SK-N-SH (cell line): ENCODE measurements at regions of chr2 and their contacts with region 1.

Region 1: DNA sequence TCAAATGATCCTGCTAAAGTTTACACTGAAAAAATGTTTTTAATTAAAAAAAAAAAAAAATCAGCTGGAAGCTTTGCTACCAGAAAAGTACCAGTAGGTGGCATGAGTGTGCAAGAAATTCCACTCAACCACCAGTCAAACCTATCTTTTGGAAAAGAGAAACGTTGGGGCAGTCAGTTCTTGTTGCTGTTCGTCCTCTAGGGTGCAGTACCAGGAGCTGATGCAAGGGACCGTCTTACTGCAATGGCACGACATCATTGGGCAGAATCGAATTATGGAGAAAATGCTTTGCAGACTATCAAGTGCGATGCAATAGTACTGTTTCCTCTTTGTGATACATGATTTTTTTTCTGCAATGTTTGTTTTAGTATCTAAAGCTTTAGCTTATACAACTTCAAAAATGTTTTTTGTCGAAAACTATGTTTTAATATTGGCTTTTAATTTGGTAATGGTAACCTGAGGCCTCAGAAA is 18.3 kb downstream of the YPEL5 start:
- DNase-seq: peak; percentile 88
- H3K4me3 ChIP-seq: no peak overlapping the region; a peak in 1 of 4 replicates
- H3K27ac ChIP-seq: no peak overlapping the region
- H3K4me1 ChIP-seq: peaks cover 2 to 9% of the 10 kb centered on the region in 2 experiments; a peak in 3 of 4 replicates
- H3K27me3 ChIP-seq: no peaks in the 10 kb centered on the region
- CTCF ChIP-seq: peak; percentile 99
- EP300 ChIP-seq: peak in 1 of 2 experiments; percentile 26; a peak in 1 of 4 replicates
- RAD21 ChIP-seq: peak; percentile 97

Region 2: DNA sequence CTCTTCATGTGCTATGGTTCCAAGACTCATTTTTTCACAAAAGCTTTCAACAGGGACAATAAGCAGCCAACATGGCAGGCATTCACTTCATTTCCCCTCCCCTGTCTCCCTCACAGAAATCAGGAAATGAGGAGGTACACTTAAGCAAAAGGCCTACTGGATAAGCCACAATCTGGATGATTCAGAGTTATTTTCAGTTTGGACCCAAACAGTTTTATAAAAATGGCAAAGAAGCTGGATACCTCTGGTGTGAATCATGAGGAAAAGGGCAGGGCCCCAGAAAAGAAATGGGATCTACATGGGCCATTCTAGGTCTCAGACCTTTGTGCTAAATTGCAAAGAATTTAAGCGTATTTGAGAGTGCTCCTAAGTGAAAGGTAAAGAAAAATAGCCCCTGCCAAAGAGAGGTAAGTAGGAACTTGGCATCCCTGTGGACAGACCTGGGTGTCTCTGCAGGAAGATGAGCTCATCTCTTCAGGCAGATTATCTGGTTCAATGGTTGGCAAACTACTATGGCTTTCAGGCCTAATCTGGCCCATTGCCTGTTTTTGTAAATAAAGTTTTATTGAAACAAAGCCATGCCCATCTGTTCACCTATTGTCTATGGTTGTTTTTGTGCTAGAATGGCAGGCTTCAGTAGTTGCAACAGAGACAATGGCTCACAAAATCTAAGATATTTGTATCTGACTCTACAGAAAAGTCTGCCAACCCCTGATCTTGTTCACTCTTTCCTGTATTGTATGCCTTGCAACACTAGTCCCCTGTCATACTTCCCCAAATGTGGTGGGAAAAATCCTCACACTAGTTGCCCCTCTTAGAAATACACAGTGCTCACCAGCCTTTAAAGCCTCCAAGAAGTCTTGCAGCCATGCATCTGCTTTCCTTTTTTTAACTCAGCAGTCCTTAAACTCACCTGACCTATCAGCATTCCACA is 558.7 kb before region 1 on chr2:
- CTCF ChIA-PET with region 1: no interaction called
- POLR2A ChIA-PET with region 1: no interaction called
- DNase-seq: no peak
- H3K4me3 ChIP-seq: no peak overlapping the region
- H3K27ac ChIP-seq: peak overlapping the region; percentile 18 to 56; a peak in 3 of 4 replicates
- H3K4me1 ChIP-seq: peaks cover 0 to 41% of the 10 kb centered on the region in 2 experiments; a peak in 3 of 4 replicates
- H3K27me3 ChIP-seq: no peaks in the 10 kb centered on the region
- CTCF ChIP-seq: no peak
- EP300 ChIP-seq: peak in 1 of 2 experiments; percentile 61; a peak in 1 of 4 replicates
- RAD21 ChIP-seq: no peak

Region 3: GRCh38 chr2:30178618-30179434 is 13.7 kb after region 1 on chr2:
- CTCF ChIA-PET with region 1: interaction called, 50 read pairs
- POLR2A ChIA-PET with region 1: no interaction called
- DNase-seq: peak; percentile 23
- H3K4me3 ChIP-seq: no peak overlapping the region
- H3K27ac ChIP-seq: no peak overlapping the region
- H3K4me1 ChIP-seq: no peaks in the 10 kb centered on the region
- H3K27me3 ChIP-seq: no peaks in the 10 kb centered on the region
- CTCF ChIP-seq: no peak
- EP300 ChIP-seq: no peak
- RAD21 ChIP-seq: no peak

Region 4: GRCh38 chr2:30193104-30193681 is 28.1 kb after region 1 on chr2:
- CTCF ChIA-PET with region 1: interaction called, 15 read pairs
- POLR2A ChIA-PET with region 1: interaction called, 3 read pairs
- DNase-seq: no peak
- H3K4me3 ChIP-seq: no peak overlapping the region
- H3K27ac ChIP-seq: no peak overlapping the region
- H3K4me1 ChIP-seq: peaks cover 0 to 6% of the 10 kb centered on the region in 2 experiments; a peak in 1 of 4 replicates
- H3K27me3 ChIP-seq: no peaks in the 10 kb centered on the region; the same call in 1 of the 2 replicates
- CTCF ChIP-seq: no peak
- EP300 ChIP-seq: no peak
- RAD21 ChIP-seq: no peak

Region 5: DNA sequence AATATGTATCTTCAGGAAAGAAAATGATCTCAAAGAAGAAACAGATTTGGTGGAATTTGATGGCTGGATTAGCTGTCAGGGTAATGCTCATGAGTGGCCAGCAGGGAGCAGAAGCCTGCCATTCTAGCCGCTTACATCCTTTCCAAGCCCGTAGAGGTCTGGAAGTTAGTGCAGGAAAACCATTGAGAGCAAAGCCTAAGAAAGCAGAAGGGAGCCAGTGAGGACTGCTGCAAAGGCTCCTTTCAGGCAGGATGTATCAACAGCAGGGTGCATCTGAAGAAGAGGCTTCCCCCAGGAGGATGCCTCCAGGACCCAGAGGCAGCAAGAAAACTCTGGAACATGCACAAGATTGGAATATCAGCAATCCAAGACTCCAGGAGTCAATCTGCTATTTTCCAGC is 43.4 kb after region 1 on chr2:
- CTCF ChIA-PET with region 1: interaction called, 189 read pairs
- POLR2A ChIA-PET with region 1: interaction called, 4 read pairs
- DNase-seq: peak; percentile 81
- H3K4me3 ChIP-seq: no peak overlapping the region
- H3K27ac ChIP-seq: no peak overlapping the region
- H3K4me1 ChIP-seq: peaks cover 0 to 10% of the 10 kb centered on the region in 2 experiments; a peak in 2 of 4 replicates
- H3K27me3 ChIP-seq: no peaks in the 10 kb centered on the region; the same call in 1 of the 2 replicates
- CTCF ChIP-seq: peak; percentile 99
- EP300 ChIP-seq: no peak
- RAD21 ChIP-seq: peak; percentile 100

Region 6: GRCh38 chr2:30225131-30225762 is 60.2 kb after region 1 on chr2:
- CTCF ChIA-PET with region 1: interaction called, 18 read pairs
- POLR2A ChIA-PET with region 1: no interaction called
- DNase-seq: no peak
- H3K4me3 ChIP-seq: peak overlapping the region; percentile 24 to 58; a peak in 3 of 4 replicates
- H3K27ac ChIP-seq: peak overlapping the region; percentile 17 to 20; a peak in 2 of 4 replicates
- H3K4me1 ChIP-seq: peaks cover 4 to 10% of the 10 kb centered on the region in 2 experiments; a peak in 3 of 4 replicates
- H3K27me3 ChIP-seq: no peaks in the 10 kb centered on the region
- CTCF ChIP-seq: no peak
- EP300 ChIP-seq: no peak
- RAD21 ChIP-seq: no peak

Region 7: DNA sequence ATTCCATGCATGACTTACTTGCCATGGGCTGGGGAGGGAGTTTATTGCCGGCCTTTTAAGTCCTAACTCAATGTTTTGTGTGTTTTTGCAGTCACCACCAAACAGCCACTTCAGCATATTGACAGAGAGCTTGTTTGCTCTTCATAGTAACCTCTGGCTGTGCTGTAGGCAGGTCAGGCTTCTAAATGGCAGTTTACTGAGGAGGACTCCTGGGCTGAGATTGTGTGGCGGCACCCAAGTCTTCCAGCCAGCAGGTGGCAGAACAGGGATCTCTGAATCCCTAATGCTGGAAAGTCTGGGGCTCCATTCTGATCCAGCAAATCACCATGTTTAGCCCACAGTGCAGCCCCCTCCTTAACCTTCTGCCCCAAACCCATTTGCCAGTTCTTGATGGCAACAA is 520.9 kb after region 1 on chr2:
- CTCF ChIA-PET with region 1: interaction called, 46 read pairs
- POLR2A ChIA-PET with region 1: no interaction called
- DNase-seq: peak; percentile 50
- H3K4me3 ChIP-seq: no peak overlapping the region; a peak in 1 of 4 replicates
- H3K27ac ChIP-seq: no peak overlapping the region
- H3K4me1 ChIP-seq: peaks cover 0 to 25% of the 10 kb centered on the region in 2 experiments; a peak in 1 of 4 replicates
- H3K27me3 ChIP-seq: no peaks in the 10 kb centered on the region
- CTCF ChIP-seq: peak; percentile 44
- EP300 ChIP-seq: no peak
- RAD21 ChIP-seq: peak; percentile 28; the same call in 1 of the 2 replicates